ENCODE measurements at regions of chr16 and their contacts with region 1.

Region 1: GRCh38 chr16:23435500-23435899 is 17.5 kb downstream of the COG7 start:
- DNase-seq: peak; percentile 71
- H3K4me3 Mint-ChIP-seq: no peak overlapping the region
- H3K27ac Mint-ChIP-seq: no peak overlapping the region
- H3K4me1 Mint-ChIP-seq: no peaks in the 10 kb centered on the region
- H3K27me3 Mint-ChIP-seq: no peaks in the 10 kb centered on the region
- CTCF ChIP-seq: peak; percentile 88

Region 2: GRCh38 chr16:23060458-23061320 is 374.8 kb before region 1 on chr16:
- CTCF ChIA-PET with region 1: interaction called, 4 read pairs
- POLR2A ChIA-PET with region 1: no interaction called
- intact Hi-C with region 1: loop called (anchors 5 kb)
- DNase-seq: peak; percentile 75
- H3K4me3 Mint-ChIP-seq: no peak overlapping the region
- H3K27ac Mint-ChIP-seq: no peak overlapping the region
- H3K4me1 Mint-ChIP-seq: peaks cover 1% of the 10 kb centered on the region
- H3K27me3 Mint-ChIP-seq: peaks cover 11% of the 10 kb centered on the region
- CTCF ChIP-seq: peak; percentile 60

Region 3: GRCh38 chr16:23217646-23218045 is 217.9 kb before region 1 on chr16:
- CTCF ChIA-PET with region 1: interaction called, 30 read pairs
- POLR2A ChIA-PET with region 1: interaction called, 3 read pairs
- intact Hi-C with region 1: no loop called
- DNase-seq: peak; percentile 17
- H3K4me3 Mint-ChIP-seq: no peak overlapping the region
- H3K27ac Mint-ChIP-seq: peak overlapping the region; percentile 9
- H3K4me1 Mint-ChIP-seq: peaks cover 5% of the 10 kb centered on the region
- H3K27me3 Mint-ChIP-seq: no peaks in the 10 kb centered on the region
- CTCF ChIP-seq: no peak

Region 4: DNA sequence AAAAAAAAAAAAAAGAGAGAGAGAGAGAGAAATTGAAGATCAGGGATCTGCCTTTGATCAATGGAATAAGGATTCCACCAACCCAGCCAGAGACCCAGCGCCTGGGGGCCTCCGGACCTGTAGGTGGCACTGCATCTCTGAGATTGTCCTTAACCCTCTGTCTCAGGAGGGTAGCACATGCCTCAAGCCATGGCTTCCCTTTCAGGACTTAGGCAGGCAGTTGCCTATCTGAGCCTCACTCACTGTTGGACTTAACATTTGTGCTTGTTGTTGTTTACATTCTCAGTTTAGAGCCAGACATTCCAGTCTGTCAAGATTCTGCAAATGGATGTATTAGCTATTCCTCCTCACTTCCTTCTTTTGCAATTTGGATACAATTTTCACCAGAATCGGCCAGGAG is 138.5 kb before region 1 on chr16:
- CTCF ChIA-PET with region 1: interaction called, 23 read pairs
- POLR2A ChIA-PET with region 1: no interaction called
- intact Hi-C with region 1: loop called (anchors 10 kb)
- DNase-seq: no peak
- H3K4me3 Mint-ChIP-seq: no peak overlapping the region
- H3K27ac Mint-ChIP-seq: no peak overlapping the region
- H3K4me1 Mint-ChIP-seq: peaks cover 17% of the 10 kb centered on the region
- H3K27me3 Mint-ChIP-seq: no peaks in the 10 kb centered on the region
- CTCF ChIP-seq: no peak

Region 5: GRCh38 chr16:23362460-23363317 is 72.8 kb before region 1 on chr16:
- CTCF ChIA-PET with region 1: interaction called, 35 read pairs
- POLR2A ChIA-PET with region 1: no interaction called
- intact Hi-C with region 1: no loop called
- DNase-seq: peak; percentile 95
- H3K4me3 Mint-ChIP-seq: no peak overlapping the region
- H3K27ac Mint-ChIP-seq: peak overlapping the region; percentile 68
- H3K4me1 Mint-ChIP-seq: peaks cover 41% of the 10 kb centered on the region
- H3K27me3 Mint-ChIP-seq: no peaks in the 10 kb centered on the region
- CTCF ChIP-seq: no peak

Region 6: GRCh38 chr16:23423496-23424049 is 11.9 kb before region 1 on chr16:
- CTCF ChIA-PET with region 1: interaction called, 81 read pairs
- POLR2A ChIA-PET with region 1: interaction called, 34 read pairs
- intact Hi-C with region 1: no loop called
- DNase-seq: peak; percentile 99
- H3K4me3 Mint-ChIP-seq: peak overlapping the region; percentile 54
- H3K27ac Mint-ChIP-seq: peak overlapping the region; percentile 81
- H3K4me1 Mint-ChIP-seq: peaks cover 23% of the 10 kb centered on the region
- H3K27me3 Mint-ChIP-seq: no peaks in the 10 kb centered on the region
- CTCF ChIP-seq: no peak

Region 7: DNA sequence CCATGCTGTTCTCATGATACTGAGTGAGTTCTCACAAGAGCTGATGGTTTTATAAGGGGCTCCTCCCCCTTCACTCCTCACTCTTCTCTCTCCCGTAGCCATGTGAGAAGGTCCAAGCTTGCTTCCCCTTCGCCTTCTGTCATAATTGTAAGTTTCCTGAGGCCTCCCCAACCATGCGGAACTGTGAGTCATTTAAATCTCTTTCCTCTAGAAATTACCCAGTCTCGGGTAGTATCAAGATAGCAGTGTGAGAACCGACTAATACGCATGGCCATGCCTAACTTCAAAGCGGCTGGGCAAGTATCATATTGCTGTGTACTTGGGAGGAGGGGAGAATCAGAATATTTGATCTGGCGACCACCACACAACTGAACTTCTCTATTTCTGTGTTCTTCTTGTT is 488.6 kb after region 1 on chr16:
- CTCF ChIA-PET with region 1: no interaction called
- POLR2A ChIA-PET with region 1: no interaction called
- intact Hi-C with region 1: no loop called
- DNase-seq: no peak
- H3K4me3 Mint-ChIP-seq: no peak overlapping the region
- H3K27ac Mint-ChIP-seq: no peak overlapping the region
- H3K4me1 Mint-ChIP-seq: no peaks in the 10 kb centered on the region
- H3K27me3 Mint-ChIP-seq: peaks cover 41% of the 10 kb centered on the region
- CTCF ChIP-seq: no peak